ENCODE measurements at regions of chr5 and their contacts with region 1.

Region 1: DNA sequence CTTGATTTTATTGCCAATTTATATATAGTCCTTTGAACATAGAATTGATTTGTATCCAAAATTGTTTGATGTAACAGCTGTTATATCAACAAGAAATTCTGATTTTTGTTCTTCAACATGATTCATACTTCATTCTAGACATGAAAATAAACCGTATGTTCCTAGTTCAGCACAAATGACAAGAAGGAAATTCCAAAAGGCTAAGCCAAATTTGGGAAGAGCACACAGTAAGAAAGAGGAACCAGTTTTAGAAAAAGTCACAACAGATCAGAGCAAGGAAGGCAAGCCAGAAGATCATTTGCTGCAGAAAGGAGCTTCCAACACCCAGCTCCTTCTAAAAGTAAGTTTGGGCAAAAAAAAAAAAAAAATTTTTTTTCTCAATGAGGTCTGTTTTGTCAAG is 65.0 kb upstream of the MCCC2 start:
- DNase-seq: no peak
- H3K4me3 ChIP-seq: no peak overlapping the region
- H3K27ac ChIP-seq: no peak overlapping the region
- H3K4me1 ChIP-seq: no peaks in the 10 kb centered on the region
- H3K27me3 ChIP-seq: no peaks in the 10 kb centered on the region

Region 2: DNA sequence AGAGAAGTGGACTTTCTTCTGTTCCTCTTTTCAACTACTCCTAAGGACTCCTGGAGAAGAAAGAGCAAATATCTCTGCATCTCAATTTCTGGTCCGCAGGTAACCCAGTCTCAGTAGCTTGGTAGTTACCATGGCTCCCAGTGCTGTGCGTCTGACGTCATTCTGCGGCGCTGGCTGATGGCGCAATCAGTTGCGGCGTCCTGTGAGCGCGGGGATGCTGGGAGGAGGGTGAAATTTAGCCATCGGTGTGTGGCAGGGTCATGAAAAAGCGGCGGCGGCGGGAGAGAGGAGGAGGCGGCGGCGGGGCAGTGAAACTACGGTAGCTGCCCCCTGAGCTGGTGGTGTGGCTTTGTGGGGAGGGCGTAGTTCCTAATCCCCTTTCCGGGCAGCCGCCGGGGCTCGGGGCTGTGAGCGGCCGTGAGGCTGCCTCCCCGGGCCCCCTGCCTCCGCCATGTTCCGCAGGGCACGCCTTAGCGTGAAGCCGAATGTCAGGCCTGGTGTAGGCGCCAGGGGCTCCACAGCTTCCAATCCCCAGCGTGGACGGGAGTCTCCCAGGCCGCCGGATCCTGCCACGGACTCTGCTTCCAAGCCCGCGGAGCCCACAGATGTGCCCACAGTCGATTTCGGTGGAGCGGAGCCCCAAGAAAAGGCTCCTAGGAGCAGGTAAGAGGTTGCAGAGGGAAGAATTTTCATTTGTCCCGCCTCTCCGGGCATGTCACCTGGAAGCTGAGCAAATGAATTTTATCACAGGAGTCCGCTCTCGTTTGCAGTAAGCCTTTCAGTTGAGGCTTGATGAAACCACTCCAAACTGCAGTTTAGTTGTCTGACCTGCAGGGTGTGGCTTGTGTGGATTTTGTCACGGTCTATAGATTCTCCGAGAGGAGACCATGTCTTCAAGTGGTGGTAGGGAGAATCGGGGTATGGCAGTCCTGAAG is 66.5 kb before region 1 on chr5 and contains the start of gene BDP1:
- in situ Hi-C with region 1: loop called (anchors 10 kb)
- DNase-seq: peak; percentile 96
- H3K4me3 ChIP-seq: peak within 1 kb of the TSS; percentile 100
- H3K27ac ChIP-seq: peak within 1 kb of the TSS; percentile 93
- H3K4me1 ChIP-seq: peaks cover 14% of the 10 kb centered on the region; the same call in 1 of the 2 replicates
- H3K27me3 ChIP-seq: 0 out of 2 replicates have a peak, but pooled peaks cover 3% of the 10 kb centered on the region
- total RNA-seq, gene BDP1: 14.5 and 18.0 TPM in 2 replicates